HCT116 (cell line): ENCODE measurements at regions of chr3 and their contacts with region 1.

Region 1: GRCh38 chr3:150870396-150870795 is 34.8 kb downstream of the MINDY4B start:
- DNase-seq: no peak
- ATAC-seq: no peak
- H3K4me3 ChIP-seq: no peak overlapping the region
- H3K27ac ChIP-seq: no peak overlapping the region
- H3K4me1 ChIP-seq: no peaks in the 10 kb centered on the region; a peak in 1 of 4 replicates
- H3K27me3 ChIP-seq: no peaks in the 10 kb centered on the region
- CTCF ChIP-seq: no peak
- POLR2A ChIP-seq: no peak
- RAD21 ChIP-seq: no peak

Region 2: GRCh38 chr3:150528354-150528797 is 342.0 kb before region 1 on chr3:
- CTCF ChIA-PET with region 1: interaction called, 10 read pairs
- POLR2A ChIA-PET with region 1: no interaction called
- RAD21 ChIA-PET with region 1: no interaction called
- intact Hi-C with region 1: loop called (anchors 5 kb)
- DNase-seq: no peak
- ATAC-seq: no peak; the same call in 1 of the 2 replicates
- H3K4me3 ChIP-seq: no peak overlapping the region
- H3K27ac ChIP-seq: no peak overlapping the region
- H3K4me1 ChIP-seq: no peaks in the 10 kb centered on the region
- H3K27me3 ChIP-seq: no peaks in the 10 kb centered on the region
- CTCF ChIP-seq: peak; percentile 18 to 44 (median 35); a peak in 2 of 6 replicates
- POLR2A ChIP-seq: no peak
- RAD21 ChIP-seq: peak; percentile 65

Region 3: GRCh38 chr3:150555859-150556436 is 314.4 kb before region 1 on chr3:
- CTCF ChIA-PET with region 1: no interaction called
- POLR2A ChIA-PET with region 1: no interaction called
- RAD21 ChIA-PET with region 1: no interaction called
- intact Hi-C with region 1: no loop called
- DNase-seq: no peak
- ATAC-seq: no peak
- H3K4me3 ChIP-seq: no peak overlapping the region
- H3K27ac ChIP-seq: no peak overlapping the region
- H3K4me1 ChIP-seq: 0 out of 4 replicates have a peak, but pooled peaks cover 0 to 4% of the 10 kb centered on the region in 2 experiments
- H3K27me3 ChIP-seq: no peaks in the 10 kb centered on the region
- CTCF ChIP-seq: no peak
- POLR2A ChIP-seq: no peak
- RAD21 ChIP-seq: no peak

Region 4: GRCh38 chr3:150589759-150590158 is 280.6 kb before region 1 on chr3:
- CTCF ChIA-PET with region 1: no interaction called
- POLR2A ChIA-PET with region 1: no interaction called
- RAD21 ChIA-PET with region 1: no interaction called
- intact Hi-C with region 1: loop called (anchors 5 kb)
- DNase-seq: no peak
- ATAC-seq: no peak
- H3K4me3 ChIP-seq: no peak overlapping the region
- H3K27ac ChIP-seq: no peak overlapping the region
- H3K4me1 ChIP-seq: no peaks in the 10 kb centered on the region
- H3K27me3 ChIP-seq: no peaks in the 10 kb centered on the region
- CTCF ChIP-seq: no peak
- POLR2A ChIP-seq: no peak
- RAD21 ChIP-seq: no peak

Region 5: GRCh38 chr3:150721285-150722130 is 148.9 kb before region 1 on chr3:
- CTCF ChIA-PET with region 1: interaction called, 18 read pairs
- POLR2A ChIA-PET with region 1: no interaction called
- RAD21 ChIA-PET with region 1: no interaction called
- intact Hi-C with region 1: loop called (anchors 1 kb)
- DNase-seq: peak; percentile 45
- ATAC-seq: peak; percentile 83
- H3K4me3 ChIP-seq: no peak overlapping the region
- H3K27ac ChIP-seq: no peak overlapping the region
- H3K4me1 ChIP-seq: peaks cover 0 to 11% of the 10 kb centered on the region in 2 experiments; a peak in 3 of 4 replicates
- H3K27me3 ChIP-seq: no peaks in the 10 kb centered on the region
- CTCF ChIP-seq: peak; percentile 69 to 91 (median 90)
- POLR2A ChIP-seq: no peak
- RAD21 ChIP-seq: peak; percentile 94

Region 6: GRCh38 chr3:150763122-150763841 is 107.1 kb before region 1 on chr3 and contains the start of gene SIAH2:
- CTCF ChIA-PET with region 1: interaction called, 12 read pairs
- POLR2A ChIA-PET with region 1: interaction called, 7 read pairs
- RAD21 ChIA-PET with region 1: interaction called, 3 read pairs
- intact Hi-C with region 1: no loop called
- DNase-seq: peak; percentile 89
- ATAC-seq: peak; percentile 81
- H3K4me3 ChIP-seq: peak within 1 kb of the TSS; percentile 72 to 91
- H3K27ac ChIP-seq: peak within 1 kb of the TSS; percentile 92
- H3K4me1 ChIP-seq: peaks cover 31 to 54% of the 10 kb centered on the region in 2 experiments
- H3K27me3 ChIP-seq: no peaks in the 10 kb centered on the region
- CTCF ChIP-seq: no peak
- POLR2A ChIP-seq: peak; percentile 75
- RAD21 ChIP-seq: no peak
- total RNA-seq, gene SIAH2: 39.9 TPM

Region 7: GRCh38 chr3:150787741-150788370 is 82.5 kb before region 1 on chr3:
- CTCF ChIA-PET with region 1: interaction called, 35 read pairs
- POLR2A ChIA-PET with region 1: no interaction called
- RAD21 ChIA-PET with region 1: interaction called in 1 of 2 experiments, 9 read pairs
- intact Hi-C with region 1: loop called (anchors 1 kb)
- DNase-seq: peak; percentile 69
- ATAC-seq: peak; percentile 95
- H3K4me3 ChIP-seq: no peak overlapping the region
- H3K27ac ChIP-seq: no peak overlapping the region
- H3K4me1 ChIP-seq: peaks cover 0 to 14% of the 10 kb centered on the region in 2 experiments; a peak in 2 of 4 replicates
- H3K27me3 ChIP-seq: no peaks in the 10 kb centered on the region
- CTCF ChIP-seq: peak; percentile 81 to 98 (median 94)
- POLR2A ChIP-seq: no peak
- RAD21 ChIP-seq: peak; percentile 92